ENCODE measurements at regions of chr15 and their contacts with region 1.

Region 1: GRCh38 chr15:75201609-75202250 is at the start of gene C15orf39:
- DNase-seq: peak; percentile 50 to 88 (median 72)
- ATAC-seq: peak; percentile 56
- H3K4me3 ChIP-seq: peak within 1 kb of the TSS; percentile 83 to 88
- H3K4me3 Mint-ChIP-seq: peak within 1 kb of the TSS; percentile 93
- H3K27ac ChIP-seq: peak within 1 kb of the TSS; percentile 82 to 85
- H3K27ac Mint-ChIP-seq: peak within 1 kb of the TSS; percentile 94
- H3K4me1 ChIP-seq: peaks cover 23% of the 10 kb centered on the region
- H3K4me1 Mint-ChIP-seq: peaks cover 47% of the 10 kb centered on the region
- H3K27me3 ChIP-seq: no peaks in the 10 kb centered on the region
- H3K27me3 Mint-ChIP-seq: no peaks in the 10 kb centered on the region
- CTCF ChIP-seq: peak; percentile 92
- total RNA-seq, gene C15orf39: 36.6 to 37.6 TPM

Region 2: DNA sequence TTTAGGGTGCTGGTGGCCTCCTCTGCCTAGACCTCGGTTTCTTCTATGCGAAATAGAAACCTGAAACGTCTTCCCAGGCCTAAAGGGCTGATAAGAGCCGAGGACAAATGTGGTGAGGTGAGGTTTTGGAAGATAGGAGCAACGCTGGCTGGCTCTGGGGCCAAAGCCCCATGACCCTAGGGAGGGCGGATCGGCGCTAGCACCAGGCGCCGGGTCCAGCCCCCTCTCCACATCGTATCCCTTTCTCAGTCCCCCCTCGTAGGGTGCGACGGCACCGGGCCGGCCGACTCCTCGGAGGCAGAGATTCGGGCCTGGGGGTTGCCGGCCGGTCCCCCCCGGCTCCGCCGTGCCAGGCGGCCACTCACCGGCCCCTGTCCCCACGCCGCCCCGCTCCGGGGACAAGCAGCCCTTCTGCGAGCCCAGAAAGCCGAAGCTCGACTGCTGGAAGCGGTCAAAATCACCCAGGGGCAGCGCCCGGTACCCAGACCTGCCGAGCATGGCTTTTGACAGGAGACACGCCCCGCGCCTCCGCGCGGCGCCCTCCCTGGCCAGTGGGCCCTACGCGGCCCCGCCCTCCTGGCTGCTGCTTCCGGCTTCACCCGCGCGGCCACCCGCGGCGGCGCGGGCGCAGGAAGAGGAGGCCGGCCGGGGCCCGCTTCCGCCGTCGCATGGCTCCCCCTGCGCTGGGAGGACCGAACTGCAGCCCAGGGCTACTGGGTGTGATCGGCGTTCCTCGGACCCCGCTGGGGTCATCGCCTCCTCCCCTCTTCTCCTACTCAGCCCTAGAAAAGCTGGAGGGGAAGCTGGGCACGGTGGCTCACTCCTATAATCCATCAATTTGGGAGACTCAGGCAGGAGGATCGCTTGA is 1209.8 kb before region 1 on chr15 and contains the start of gene STOML1:
- CTCF ChIA-PET with region 1: no interaction called
- POLR2A ChIA-PET with region 1: no interaction called
- intact Hi-C with region 1: loop called in 1 of 2 experiments (anchors 5 kb)
- DNase-seq: peak; percentile 88 to 97 (median 96)
- ATAC-seq: peak; percentile 79
- H3K4me3 ChIP-seq: peak within 1 kb of the TSS; percentile 62 to 88
- H3K4me3 Mint-ChIP-seq: peak within 1 kb of the TSS; percentile 100
- H3K27ac ChIP-seq: peak within 1 kb of the TSS; percentile 53
- H3K27ac Mint-ChIP-seq: peak within 1 kb of the TSS; percentile 73
- H3K4me1 ChIP-seq: peaks cover 42% of the 10 kb centered on the region
- H3K4me1 Mint-ChIP-seq: peaks cover 48% of the 10 kb centered on the region
- H3K27me3 ChIP-seq: no peaks in the 10 kb centered on the region
- H3K27me3 Mint-ChIP-seq: no peaks in the 10 kb centered on the region
- CTCF ChIP-seq: peak; percentile 95
- total RNA-seq, gene STOML1: 2.5 to 4.8 TPM

Region 3: GRCh38 chr15:74615508-74616365 is 586.0 kb before region 1 on chr15 and contains the start of gene CLK3:
- CTCF ChIA-PET with region 1: no interaction called
- POLR2A ChIA-PET with region 1: no interaction called
- intact Hi-C with region 1: loop called in 1 of 2 experiments (anchors 2 kb)
- DNase-seq: peak; percentile 89 to 99 (median 96)
- ATAC-seq: peak; percentile 67
- H3K4me3 ChIP-seq: peak within 1 kb of the TSS; percentile 88 to 95
- H3K4me3 Mint-ChIP-seq: peak within 1 kb of the TSS; percentile 91
- H3K27ac ChIP-seq: peak within 1 kb of the TSS; percentile 97 to 99
- H3K27ac Mint-ChIP-seq: peak within 1 kb of the TSS; percentile 97
- H3K4me1 ChIP-seq: peaks cover 25% of the 10 kb centered on the region
- H3K4me1 Mint-ChIP-seq: peaks cover 38% of the 10 kb centered on the region
- H3K27me3 ChIP-seq: no peaks in the 10 kb centered on the region
- H3K27me3 Mint-ChIP-seq: no peaks in the 10 kb centered on the region
- CTCF ChIP-seq: no peak
- total RNA-seq, gene CLK3: 246 to 262 TPM

Region 4: DNA sequence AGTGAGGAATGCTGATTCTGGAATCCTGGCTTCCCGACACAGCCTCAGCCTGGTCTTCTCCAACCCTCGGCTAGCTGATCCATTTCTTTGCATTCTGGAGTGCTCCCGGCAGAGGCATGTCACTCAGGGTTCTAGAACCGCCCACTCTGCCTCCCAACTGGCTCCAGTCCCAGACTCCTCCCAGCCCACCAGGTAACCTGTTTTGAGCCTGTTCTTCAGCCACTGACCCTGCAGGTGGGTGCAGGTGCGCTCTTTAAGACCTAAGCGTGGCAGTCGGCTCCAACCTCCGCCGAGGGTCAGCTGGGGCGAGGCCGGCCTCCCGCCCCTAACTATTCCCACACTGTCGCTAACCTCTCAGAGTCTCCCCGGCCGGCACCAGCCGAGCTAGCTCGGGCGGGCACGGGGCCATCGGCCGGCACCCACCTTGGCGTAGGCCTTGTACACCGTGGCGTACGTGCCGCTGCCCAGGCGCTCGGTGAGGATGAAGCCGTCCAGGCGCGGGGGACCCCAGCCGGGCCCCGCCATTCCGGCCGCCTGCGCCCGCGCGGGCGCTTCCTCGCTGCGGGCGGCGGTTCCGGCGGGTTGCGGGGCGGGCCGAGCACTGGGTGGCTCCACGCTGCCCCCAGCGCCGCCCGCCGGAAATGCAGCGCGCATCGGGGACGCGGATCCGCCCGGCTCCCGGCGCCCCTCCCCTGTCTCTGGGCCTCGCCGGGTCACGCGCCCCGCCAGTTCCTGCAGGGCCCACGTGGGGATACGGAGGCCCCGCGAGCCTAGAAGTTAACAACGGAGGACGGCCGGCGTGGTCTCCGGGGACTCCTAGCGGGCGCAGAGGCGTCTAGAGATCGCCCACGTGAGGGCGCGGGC is 358.9 kb before region 1 on chr15 and contains the start of gene ULK3:
- CTCF ChIA-PET with region 1: no interaction called
- POLR2A ChIA-PET with region 1: interaction called, 3 read pairs
- intact Hi-C with region 1: loop called (anchors 1 to 5 kb)
- DNase-seq: peak; percentile 88 to 96 (median 92)
- ATAC-seq: peak; percentile 92
- H3K4me3 ChIP-seq: peak within 1 kb of the TSS; percentile 90 to 97
- H3K4me3 Mint-ChIP-seq: peak within 1 kb of the TSS; percentile 91
- H3K27ac ChIP-seq: peak within 1 kb of the TSS; percentile 72 to 78
- H3K27ac Mint-ChIP-seq: peak within 1 kb of the TSS; percentile 93
- H3K4me1 ChIP-seq: peaks cover 43% of the 10 kb centered on the region
- H3K4me1 Mint-ChIP-seq: peaks cover 48% of the 10 kb centered on the region
- H3K27me3 ChIP-seq: no peaks in the 10 kb centered on the region
- H3K27me3 Mint-ChIP-seq: no peaks in the 10 kb centered on the region
- CTCF ChIP-seq: peak; percentile 71
- total RNA-seq, gene ULK3: 34.3 to 35.1 TPM

Region 5: GRCh38 chr15:74956648-74957300 is 245.0 kb before region 1 on chr15 and contains the start of gene RPP25:
- CTCF ChIA-PET with region 1: interaction called, 3 read pairs
- POLR2A ChIA-PET with region 1: no interaction called
- intact Hi-C with region 1: loop called (anchors 1 to 2 kb)
- DNase-seq: peak; percentile 22 to 78 (median 66)
- ATAC-seq: peak; percentile 89
- H3K4me3 ChIP-seq: peak within 1 kb of the TSS; percentile 56 to 65
- H3K4me3 Mint-ChIP-seq: peak within 1 kb of the TSS; percentile 81
- H3K27ac ChIP-seq: no peak within 1 kb of the TSS
- H3K27ac Mint-ChIP-seq: no peak within 1 kb of the TSS
- H3K4me1 ChIP-seq: peaks cover 26% of the 10 kb centered on the region
- H3K4me1 Mint-ChIP-seq: peaks cover 30% of the 10 kb centered on the region
- H3K27me3 ChIP-seq: peaks cover 17 to 28% of the 10 kb centered on the region in 2 experiments
- H3K27me3 Mint-ChIP-seq: peaks cover 25% of the 10 kb centered on the region
- CTCF ChIP-seq: no peak
- total RNA-seq, gene RPP25: 0.22 to 0.28 TPM

Region 6: GRCh38 chr15:75029378-75030022 is 172.2 kb before region 1 on chr15:
- CTCF ChIA-PET with region 1: interaction called, 114 read pairs
- POLR2A ChIA-PET with region 1: interaction called, 7 read pairs
- intact Hi-C with region 1: loop called in 1 of 2 experiments (anchors 1 kb)
- DNase-seq: peak; percentile 76 to 93 (median 87)
- ATAC-seq: peak; percentile 99
- H3K4me3 ChIP-seq: no peak overlapping the region
- H3K4me3 Mint-ChIP-seq: no peak overlapping the region
- H3K27ac ChIP-seq: no peak overlapping the region
- H3K27ac Mint-ChIP-seq: no peak overlapping the region
- H3K4me1 ChIP-seq: peaks cover 2% of the 10 kb centered on the region
- H3K4me1 Mint-ChIP-seq: peaks cover 10% of the 10 kb centered on the region
- H3K27me3 ChIP-seq: no peaks in the 10 kb centered on the region
- H3K27me3 Mint-ChIP-seq: no peaks in the 10 kb centered on the region
- CTCF ChIP-seq: peak; percentile 77

Region 7: GRCh38 chr15:75639709-75640482 is 438.2 kb after region 1 on chr15 and contains the start of gene IMP3:
- CTCF ChIA-PET with region 1: no interaction called
- POLR2A ChIA-PET with region 1: interaction called, 4 read pairs
- intact Hi-C with region 1: loop called in 1 of 2 experiments (anchors 5 kb)
- DNase-seq: peak; percentile 81 to 98 (median 94)
- ATAC-seq: peak; percentile 90
- H3K4me3 ChIP-seq: peak within 1 kb of the TSS; percentile 80 to 99
- H3K4me3 Mint-ChIP-seq: peak within 1 kb of the TSS; percentile 91
- H3K27ac ChIP-seq: peak within 1 kb of the TSS; percentile 79 to 98
- H3K27ac Mint-ChIP-seq: peak within 1 kb of the TSS; percentile 97
- H3K4me1 ChIP-seq: peaks cover 31% of the 10 kb centered on the region
- H3K4me1 Mint-ChIP-seq: peaks cover 41% of the 10 kb centered on the region
- H3K27me3 ChIP-seq: no peaks in the 10 kb centered on the region
- H3K27me3 Mint-ChIP-seq: no peaks in the 10 kb centered on the region
- CTCF ChIP-seq: no peak
- total RNA-seq, gene IMP3: 67.1 to 69.5 TPM